HEK293T (cell line): ENCODE measurements at regions of chr14 and their contacts with region 1.

Region 1: GRCh38 chr14:21014761-21015190 is 10.1 kb downstream of the NDRG2 start:
- DNase-seq: peak; percentile 79

Region 2: GRCh38 chr14:20998664-20999366 is 16.0 kb before region 1 on chr14 and contains the start of gene SLC39A2:
- CTCF ChIA-PET with region 1: interaction called, 26 read pairs
- POLR2A ChIA-PET with region 1: interaction called, 4 read pairs
- DNase-seq: peak; percentile 22

Region 3: GRCh38 chr14:21024585-21025370 is 10.0 kb after region 1 on chr14 and contains the start of gene NDRG2:
- CTCF ChIA-PET with region 1: interaction called, 12 read pairs
- POLR2A ChIA-PET with region 1: interaction called, 9 read pairs
- DNase-seq: peak; percentile 81

Region 4: DNA sequence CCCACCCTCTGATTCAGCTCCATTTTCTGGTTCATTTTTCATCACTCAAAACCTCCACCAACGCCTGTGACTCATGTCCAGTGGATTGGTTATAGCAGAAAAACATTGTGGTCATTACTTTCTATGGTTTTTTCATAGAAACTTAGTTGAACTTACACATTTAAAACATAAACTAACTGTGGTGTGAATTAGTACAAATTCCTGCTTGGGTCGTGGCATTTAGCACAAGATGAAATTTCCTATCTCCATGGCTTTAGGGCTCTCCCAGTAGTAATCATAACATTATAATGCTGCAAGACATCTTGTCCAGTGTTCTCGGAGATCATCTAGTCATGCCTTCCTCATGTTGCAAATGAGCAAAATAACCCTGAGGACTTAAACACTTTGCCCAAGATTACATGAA is 34.5 kb after region 1 on chr14:
- CTCF ChIA-PET with region 1: interaction called, 17 read pairs
- POLR2A ChIA-PET with region 1: interaction called, 3 read pairs
- DNase-seq: no peak

Region 5: DNA sequence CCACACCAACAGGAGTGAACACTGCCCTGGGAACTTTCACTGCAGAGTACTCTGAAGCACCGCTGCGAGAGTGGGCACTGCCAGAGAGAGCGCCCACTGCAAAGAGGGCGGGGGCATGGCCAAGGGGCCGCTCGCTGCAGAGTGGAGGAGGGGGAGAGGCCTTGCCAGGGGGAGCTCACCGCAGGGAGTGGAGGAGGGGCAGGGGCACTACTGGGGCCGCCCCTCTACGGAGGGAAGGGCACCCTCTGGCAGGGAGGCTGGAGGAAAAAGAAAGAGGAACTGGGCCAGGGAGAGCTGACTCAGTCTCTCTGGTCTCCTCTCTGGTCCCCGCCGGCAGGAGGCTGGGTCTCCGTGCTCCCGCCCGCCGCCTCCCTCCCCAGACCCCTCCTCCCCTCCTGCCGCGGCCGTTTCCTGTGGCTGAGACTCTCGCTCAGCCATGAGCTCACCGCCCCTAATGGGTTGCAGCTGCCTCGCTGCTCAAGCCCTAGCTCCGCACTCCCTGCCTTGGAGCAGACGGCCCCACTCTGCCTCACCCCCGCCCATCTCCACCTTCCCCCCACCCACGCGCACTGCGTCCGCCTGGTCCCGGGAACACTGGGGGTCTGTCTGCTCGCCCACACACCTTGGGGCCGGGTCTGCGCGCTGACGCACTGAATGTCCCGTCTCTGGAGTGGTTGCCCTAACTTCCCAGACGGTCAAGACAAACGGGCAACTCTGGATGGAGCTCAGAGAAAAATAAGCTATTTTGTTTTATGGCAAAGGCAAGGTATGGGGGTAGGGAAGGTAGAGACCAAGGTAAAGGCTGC is 56.7 kb after region 1 on chr14:
- CTCF ChIA-PET with region 1: interaction called, 19 read pairs
- POLR2A ChIA-PET with region 1: interaction called, 9 read pairs
- DNase-seq: peak; percentile 79

Region 6: GRCh38 chr14:21103710-21104447 is 89.1 kb after region 1 on chr14:
- CTCF ChIA-PET with region 1: interaction called, 32 read pairs
- POLR2A ChIA-PET with region 1: interaction called, 10 read pairs
- DNase-seq: peak; percentile 94